T-cell (primary cell): ENCODE measurements at regions of chr1 and their contacts with region 1.

Region 1: DNA sequence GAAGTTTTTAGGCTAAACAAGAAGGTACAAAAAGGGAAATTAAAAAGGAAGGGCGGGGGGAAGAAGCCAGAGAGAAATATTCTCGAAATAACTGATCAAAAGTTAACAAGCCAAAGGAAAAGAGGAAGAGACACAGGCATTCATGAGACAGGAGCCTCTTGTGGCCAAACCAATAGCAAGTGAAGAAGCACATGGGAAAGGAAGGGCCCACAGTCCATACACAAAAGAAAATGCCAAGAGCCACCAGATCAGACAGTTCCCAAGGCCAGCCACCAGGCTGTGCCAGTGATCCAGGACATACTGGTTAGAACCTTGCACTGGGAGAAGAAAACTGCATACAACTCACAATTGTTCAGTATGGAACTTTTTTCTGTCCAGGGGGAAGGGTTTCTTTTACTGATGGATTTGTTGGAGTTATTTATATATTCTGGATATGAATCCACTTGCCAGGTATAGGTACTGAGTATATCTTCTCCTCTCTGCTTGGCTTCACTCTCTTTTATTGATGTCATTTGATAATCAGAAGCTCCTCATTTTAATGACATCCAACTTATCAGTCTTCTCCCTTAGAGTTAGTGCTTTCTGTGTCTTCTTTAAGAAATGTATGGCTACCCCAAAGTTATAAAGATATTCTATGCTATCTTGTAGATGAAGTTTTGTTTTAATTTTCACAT is 76.8 kb downstream of the CD46 start:
- DNase-seq: peak in 34 of 35 experiments; percentile 34 to 80 (median 58)
- ATAC-seq: peak; percentile 13 to 35 (median 18)
- H3K4me3 ChIP-seq: no peak overlapping the region
- H3K4me3 Mint-ChIP-seq: no peak overlapping the region
- H3K27ac ChIP-seq: peak overlapping the region; percentile 18
- H3K27ac Mint-ChIP-seq: peak overlapping the region; percentile 98 to 99
- H3K4me1 ChIP-seq: peaks cover 28 to 70% of the 10 kb centered on the region in 2 experiments
- H3K4me1 Mint-ChIP-seq: peaks cover 96 to 100% (median 99%) of the 10 kb centered on the region in 3 donors
- H3K27me3 ChIP-seq: no peaks in the 10 kb centered on the region
- H3K27me3 Mint-ChIP-seq: peaks cover 2 to 4% of the 10 kb centered on the region in 2 donors

Region 2: DNA sequence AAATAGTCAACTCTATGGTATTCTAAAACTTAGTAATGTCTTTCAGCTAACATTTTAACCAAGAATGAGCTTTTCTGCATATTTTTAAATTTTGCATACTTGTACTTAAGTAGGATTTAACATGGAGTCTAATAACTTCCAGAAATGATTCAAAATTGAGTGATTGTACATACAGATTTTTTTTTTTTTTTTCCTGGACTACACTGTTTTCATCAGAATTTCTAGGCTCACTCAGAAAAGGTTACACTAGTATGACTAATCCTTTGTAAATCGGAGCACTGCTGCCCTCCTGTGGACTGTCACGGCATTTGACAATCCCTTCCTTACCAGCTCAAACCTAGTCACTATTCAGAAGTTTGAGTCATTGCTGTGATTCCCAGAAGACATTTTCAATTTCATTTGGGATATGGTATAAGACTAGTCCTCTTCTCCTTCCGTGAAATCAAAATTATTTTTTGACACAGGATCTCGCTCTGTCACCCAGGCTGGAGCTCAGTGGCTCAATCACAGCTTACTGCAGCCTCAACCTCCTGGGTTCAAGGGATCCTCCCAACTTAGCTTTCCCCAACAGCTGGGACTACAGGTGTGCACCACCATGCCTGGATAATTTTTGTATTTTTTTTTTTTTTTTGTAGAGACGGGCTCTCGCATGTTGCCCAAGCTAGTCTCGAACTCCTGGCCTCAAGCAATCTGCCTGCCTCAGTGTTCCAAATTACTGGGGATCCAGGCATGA is 31.2 kb before region 1 on chr1:
- CTCF ChIA-PET with region 1: interaction called in 1 of 2 experiments, 11 read pairs
- POLR2A ChIA-PET with region 1: interaction called in 1 of 2 experiments, 5 read pairs
- DNase-seq: peak; percentile 36 to 83 (median 70)
- ATAC-seq: peak; percentile 75 to 82 (median 78)
- H3K4me3 ChIP-seq: no peak overlapping the region
- H3K4me3 Mint-ChIP-seq: peak overlapping the region in 1 of 3 donors; percentile 49
- H3K27ac ChIP-seq: no peak overlapping the region
- H3K27ac Mint-ChIP-seq: peak overlapping the region; percentile 6 to 31
- H3K4me1 ChIP-seq: peaks cover 2 to 16% of the 10 kb centered on the region in 2 experiments
- H3K4me1 Mint-ChIP-seq: peaks cover 40 to 48% (median 47%) of the 10 kb centered on the region in 3 donors
- H3K27me3 ChIP-seq: no peaks in the 10 kb centered on the region
- H3K27me3 Mint-ChIP-seq: no peaks in the 10 kb centered on the region

Region 3: DNA sequence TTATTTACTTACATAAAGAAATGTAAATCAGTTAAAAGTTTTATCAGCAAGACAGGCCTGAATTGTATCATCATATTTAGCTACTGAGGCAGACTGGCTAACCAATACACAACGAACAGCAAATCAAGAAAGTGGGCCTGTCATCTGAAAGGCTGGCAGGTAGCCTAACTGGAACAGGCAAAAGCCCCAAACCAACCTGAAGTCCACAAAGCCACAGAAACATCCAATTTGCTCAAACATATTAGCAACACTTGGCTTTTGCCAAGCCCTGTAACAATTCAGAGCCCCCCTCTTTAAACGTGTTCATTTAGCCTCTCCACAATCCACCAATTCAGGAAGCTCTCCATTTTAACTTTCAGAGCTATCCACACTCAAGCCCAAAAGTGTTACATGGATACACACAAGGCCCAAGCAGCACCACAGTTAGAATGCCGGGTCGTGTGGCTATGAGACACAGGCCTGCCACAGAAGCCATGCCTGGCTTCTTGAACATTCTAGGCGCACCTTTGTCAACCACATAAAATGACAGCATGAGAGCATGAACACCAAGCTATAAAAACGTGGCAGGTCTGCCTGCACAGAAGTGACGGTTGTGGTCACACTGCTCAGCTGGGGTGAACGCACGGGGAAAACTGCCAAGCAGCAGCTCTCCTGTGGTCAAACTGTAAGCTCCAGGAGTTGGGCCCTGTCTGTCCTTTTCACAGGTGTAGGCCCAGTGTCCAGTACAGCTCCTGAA is 33.0 kb after region 1 on chr1:
- CTCF ChIA-PET with region 1: interaction called, 6 to 11 read pairs
- POLR2A ChIA-PET with region 1: interaction called, 4 read pairs
- DNase-seq: peak in 32 of 35 experiments; percentile 22 to 64 (median 40)
- ATAC-seq: peak; percentile 58 to 80 (median 70)
- H3K4me3 ChIP-seq: no peak overlapping the region
- H3K4me3 Mint-ChIP-seq: peak overlapping the region; percentile 43 to 91 (median 54)
- H3K27ac ChIP-seq: peak overlapping the region; percentile 76
- H3K27ac Mint-ChIP-seq: peak overlapping the region; percentile 87 to 92
- H3K4me1 ChIP-seq: peaks cover 26 to 65% of the 10 kb centered on the region in 2 experiments
- H3K4me1 Mint-ChIP-seq: peaks cover 60 to 65% (median 64%) of the 10 kb centered on the region in 3 donors
- H3K27me3 ChIP-seq: no peaks in the 10 kb centered on the region
- H3K27me3 Mint-ChIP-seq: no peaks in the 10 kb centered on the region

Region 4: DNA sequence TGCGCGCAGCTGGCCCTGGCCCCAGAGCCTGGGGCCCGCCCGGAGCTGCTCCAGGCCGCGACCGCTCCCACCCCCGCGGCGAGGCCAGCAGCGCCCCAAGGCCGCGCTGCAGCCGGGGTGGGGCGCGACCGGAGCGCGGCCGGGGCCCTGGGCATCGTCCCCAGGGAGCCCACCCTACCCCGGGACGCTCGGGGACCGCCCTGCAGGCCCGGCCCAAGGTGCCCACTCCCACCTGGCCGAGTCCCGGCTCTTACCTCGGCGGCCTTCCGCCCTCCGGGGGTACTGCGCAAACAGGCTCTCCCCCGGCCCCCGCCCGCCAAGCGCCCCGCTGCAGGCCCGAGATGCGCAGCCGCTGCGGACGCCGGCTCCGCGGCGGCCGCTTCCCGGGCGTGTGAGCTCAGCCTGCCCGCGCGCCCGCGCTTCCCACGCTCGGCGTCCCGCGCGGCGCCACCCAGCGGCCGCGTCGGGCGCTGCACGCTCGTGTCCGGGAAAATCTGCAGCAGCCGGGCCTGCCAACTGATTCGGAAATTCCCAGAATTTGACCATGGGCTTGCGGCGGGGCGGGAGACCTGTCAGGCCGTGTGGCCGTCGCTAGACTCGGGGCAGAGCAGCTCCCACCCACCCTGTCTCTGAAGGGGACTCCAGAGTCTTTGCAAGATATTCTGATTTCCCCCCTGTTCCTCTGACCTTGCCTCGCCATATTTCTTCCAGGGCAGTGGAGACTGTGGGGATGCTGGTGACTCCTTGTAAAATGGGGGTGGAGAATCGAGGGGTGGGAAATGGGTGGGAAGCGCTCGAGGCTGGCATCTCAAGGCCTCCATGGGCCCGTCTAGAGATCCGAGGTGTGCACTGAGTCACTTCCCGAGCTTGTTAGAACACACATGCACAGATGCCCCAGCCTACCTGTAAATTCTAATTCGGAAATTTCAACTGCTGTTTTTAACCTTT is 40.4 kb after region 1 on chr1:
- CTCF ChIA-PET with region 1: interaction called, 22 to 48 read pairs
- POLR2A ChIA-PET with region 1: interaction called, 6 to 7 read pairs
- DNase-seq: peak; percentile 31 to 90 (median 59)
- ATAC-seq: peak; percentile 64 to 79 (median 70)
- H3K4me3 ChIP-seq: peak overlapping the region; percentile 91
- H3K4me3 Mint-ChIP-seq: peak overlapping the region; percentile 91 to 97 (median 93)
- H3K27ac ChIP-seq: peak overlapping the region; percentile 91
- H3K27ac Mint-ChIP-seq: peak overlapping the region; percentile 92 to 95
- H3K4me1 ChIP-seq: peaks cover 24 to 79% of the 10 kb centered on the region in 2 experiments
- H3K4me1 Mint-ChIP-seq: peaks cover 82 to 89% (median 86%) of the 10 kb centered on the region in 3 donors
- H3K27me3 ChIP-seq: no peaks in the 10 kb centered on the region
- H3K27me3 Mint-ChIP-seq: no peaks in the 10 kb centered on the region

Region 5: GRCh38 chr1:207876131-207876530 is 47.5 kb after region 1 on chr1:
- CTCF ChIA-PET with region 1: interaction called, 16 to 17 read pairs
- POLR2A ChIA-PET with region 1: interaction called, 3 to 7 read pairs
- DNase-seq: no peak
- ATAC-seq: no peak
- H3K4me3 ChIP-seq: no peak overlapping the region
- H3K4me3 Mint-ChIP-seq: no peak overlapping the region
- H3K27ac ChIP-seq: no peak overlapping the region
- H3K27ac Mint-ChIP-seq: peak overlapping the region in 1 of 2 donors; percentile 71
- H3K4me1 ChIP-seq: peaks cover 9 to 28% of the 10 kb centered on the region in 2 experiments
- H3K4me1 Mint-ChIP-seq: peaks cover 50 to 58% (median 52%) of the 10 kb centered on the region in 3 donors
- H3K27me3 ChIP-seq: no peaks in the 10 kb centered on the region
- H3K27me3 Mint-ChIP-seq: no peaks in the 10 kb centered on the region

Region 6: GRCh38 chr1:207885129-207886032 is 56.8 kb after region 1 on chr1:
- CTCF ChIA-PET with region 1: interaction called, 11 to 16 read pairs
- POLR2A ChIA-PET with region 1: interaction called in 1 of 2 experiments, 11 read pairs
- DNase-seq: peak; percentile 19 to 89 (median 61)
- ATAC-seq: peak; percentile 66 to 70 (median 68)
- H3K4me3 ChIP-seq: no peak overlapping the region
- H3K4me3 Mint-ChIP-seq: peak overlapping the region in 1 of 3 donors; percentile 74
- H3K27ac ChIP-seq: no peak overlapping the region
- H3K27ac Mint-ChIP-seq: peak overlapping the region; percentile 99
- H3K4me1 ChIP-seq: peaks cover 12 to 23% of the 10 kb centered on the region in 2 experiments
- H3K4me1 Mint-ChIP-seq: peaks cover 35 to 44% (median 42%) of the 10 kb centered on the region in 3 donors
- H3K27me3 ChIP-seq: peaks cover 0 to 6% of the 10 kb centered on the region in 2 experiments
- H3K27me3 Mint-ChIP-seq: peaks cover 0 to 8% of the 10 kb centered on the region in 2 donors

Region 7: DNA sequence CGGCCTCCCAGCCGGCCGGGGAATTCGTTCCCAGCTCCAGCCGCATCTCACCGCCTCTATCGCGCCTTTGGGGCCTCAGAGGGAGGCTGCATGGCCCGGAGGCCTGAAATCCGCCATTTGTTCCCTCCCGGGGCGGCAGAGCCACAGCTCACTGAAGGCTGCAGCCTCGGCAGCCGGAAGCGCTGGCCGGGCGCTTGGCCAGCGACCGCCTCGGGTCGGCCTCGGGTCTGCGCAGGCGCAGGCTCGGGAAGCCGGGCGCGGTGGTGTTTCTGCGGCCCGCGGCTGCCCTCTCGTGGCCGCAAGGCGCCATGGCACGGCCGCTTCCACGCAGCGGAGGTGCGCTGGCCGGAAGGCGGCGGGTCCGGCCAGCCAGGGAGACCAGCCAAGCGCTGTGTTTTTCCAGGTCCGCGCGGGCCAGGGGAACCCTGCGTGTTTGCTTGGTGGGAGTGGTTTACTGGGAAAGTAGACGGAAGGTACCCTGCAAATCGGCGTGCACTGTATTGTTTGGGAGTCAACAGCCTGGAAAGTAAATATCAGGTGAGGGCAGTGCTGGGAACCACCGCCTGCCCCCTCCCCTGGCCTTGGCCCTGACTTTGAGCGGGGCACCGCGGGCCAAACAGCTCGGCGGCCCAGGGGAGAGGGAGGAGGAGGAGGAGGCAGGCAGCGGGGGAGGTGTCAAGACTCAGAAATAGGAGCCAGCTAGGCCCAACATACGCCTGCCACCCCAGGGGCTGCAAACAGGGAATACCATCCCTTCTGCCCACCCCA is 135.0 kb after region 1 on chr1:
- CTCF ChIA-PET with region 1: interaction called, 11 to 23 read pairs
- POLR2A ChIA-PET with region 1: interaction called in 1 of 2 experiments, 4 read pairs
- DNase-seq: peak; percentile 42 to 90 (median 73)
- ATAC-seq: peak; percentile 85 to 93 (median 87)
- H3K4me3 ChIP-seq: peak overlapping the region; percentile 79 to 88
- H3K4me3 Mint-ChIP-seq: peak overlapping the region; percentile 77 to 86 (median 79)
- H3K27ac ChIP-seq: peak overlapping the region; percentile 42
- H3K27ac Mint-ChIP-seq: peak overlapping the region in 1 of 2 donors; percentile 69
- H3K4me1 ChIP-seq: peaks cover 0 to 25% of the 10 kb centered on the region in 2 experiments
- H3K4me1 Mint-ChIP-seq: peaks cover 12 to 18% (median 16%) of the 10 kb centered on the region in 3 donors
- H3K27me3 ChIP-seq: peaks cover 0 to 35% of the 10 kb centered on the region in 2 experiments
- H3K27me3 Mint-ChIP-seq: peaks cover 20 to 21% of the 10 kb centered on the region in 2 donors